Upper lobe of right lung (tissue), 1 donor: ENCODE measurements at regions of chr9 and their contacts with region 1.

Region 1: DNA sequence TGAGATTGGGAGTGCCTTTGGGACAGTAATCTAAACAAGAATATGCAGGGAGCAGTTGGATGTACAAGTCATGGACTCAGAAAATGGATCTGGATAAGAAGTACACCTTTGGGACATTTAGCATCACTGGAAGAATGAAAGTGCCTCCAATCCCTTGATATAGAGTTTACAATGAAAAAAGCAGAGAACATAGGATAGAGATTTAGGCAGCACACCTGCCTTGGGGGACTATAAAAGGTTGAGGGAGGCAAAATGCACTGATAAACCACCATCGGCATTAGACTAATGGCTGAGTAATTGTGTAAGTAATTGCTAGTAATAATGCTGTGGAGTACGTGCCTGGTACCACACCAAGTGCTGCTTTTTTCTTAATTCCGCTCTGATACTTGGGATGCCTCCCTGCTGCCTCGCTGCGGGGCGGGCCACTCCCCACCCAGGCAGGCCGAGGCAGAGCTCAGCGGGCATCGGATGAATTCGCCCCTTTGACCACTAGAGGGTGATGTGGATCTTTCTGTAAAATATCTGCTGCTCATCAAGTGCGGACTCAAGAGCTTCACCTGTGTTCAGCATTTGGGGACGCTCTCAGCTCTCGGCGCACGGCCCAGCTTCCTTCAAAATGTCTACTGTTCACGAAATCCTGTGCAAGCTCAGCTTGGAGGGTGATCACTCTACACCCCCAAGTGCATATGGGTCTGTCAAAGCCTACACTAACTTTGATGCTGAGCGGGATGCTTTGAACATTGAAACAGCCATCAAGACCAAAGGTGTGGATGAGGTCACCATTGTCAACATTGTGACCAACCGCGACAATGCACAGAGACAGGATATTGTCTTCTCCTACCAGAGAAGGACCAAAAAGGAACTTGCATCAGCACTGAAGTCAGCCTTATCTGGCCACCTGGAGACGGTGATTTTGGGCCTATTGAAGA is 99.9 kb downstream of the ANKRD18B start:
- DNase-seq: peak; percentile 73
- ATAC-seq: peak; percentile 98
- H3K4me3 ChIP-seq: no peak overlapping the region
- H3K27ac ChIP-seq: no peak overlapping the region
- H3K4me1 ChIP-seq: no peaks in the 10 kb centered on the region
- H3K27me3 ChIP-seq: peaks cover 26% of the 10 kb centered on the region
- CTCF ChIP-seq: peak; percentile 89

Region 2: GRCh38 chr9:33721674-33722358 is 97.9 kb after region 1 on chr9:
- intact Hi-C with region 1: loop called (anchors 5 kb)
- DNase-seq: peak; percentile 91
- ATAC-seq: peak; percentile 98
- H3K4me3 ChIP-seq: no peak overlapping the region
- H3K27ac ChIP-seq: no peak overlapping the region
- H3K4me1 ChIP-seq: no peaks in the 10 kb centered on the region
- H3K27me3 ChIP-seq: no peaks in the 10 kb centered on the region
- CTCF ChIP-seq: peak; percentile 100